K562 (cell line): ENCODE measurements at regions of chr2 and their contacts with region 1.

Region 1: DNA sequence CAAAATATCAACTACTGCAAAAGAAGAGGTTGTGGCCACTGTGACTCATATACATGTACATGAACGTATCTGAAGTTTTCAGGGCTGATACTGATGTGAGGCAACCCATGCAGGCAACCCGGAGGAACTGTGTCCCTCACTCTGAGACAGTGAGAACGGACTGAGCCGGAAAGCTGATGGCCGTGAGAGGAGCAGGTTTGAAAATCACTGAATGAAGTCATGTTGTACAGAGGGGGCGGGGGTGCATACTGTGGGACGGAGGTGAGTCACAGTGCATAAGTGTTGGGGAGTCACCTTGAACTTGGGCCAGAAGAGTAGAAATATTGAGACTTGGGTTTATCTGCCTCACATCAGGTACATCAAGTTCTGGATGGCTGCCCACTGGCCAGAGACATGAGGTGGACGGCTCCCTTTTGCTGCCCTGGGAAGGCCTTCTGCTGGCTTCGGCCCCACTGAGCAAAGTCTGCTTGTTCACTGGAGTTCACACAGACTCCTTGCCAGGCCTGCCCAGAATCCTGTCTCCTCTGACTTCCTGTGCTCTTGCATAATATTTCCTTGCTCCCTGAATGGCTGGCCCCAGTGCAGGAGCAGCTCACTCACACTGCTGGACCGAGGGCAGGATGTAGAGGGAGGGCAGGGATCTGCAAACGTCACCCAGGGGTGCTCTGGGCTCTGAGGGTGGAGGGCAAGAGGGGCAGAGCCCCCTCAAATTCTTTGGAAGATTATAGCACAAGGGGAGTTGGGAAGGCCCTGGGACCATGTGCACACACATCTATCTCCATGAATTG is 18.1 kb downstream of the EPAS1 start:
- DNase-seq: peak; percentile 75 to 92 (median 82)
- ATAC-seq: peak; percentile 89
- H3K4me3 ChIP-seq: no peak overlapping the region
- H3K27ac ChIP-seq: peak overlapping the region; percentile 86
- H3K4me1 ChIP-seq: peaks cover 24 to 61% of the 10 kb centered on the region in 2 experiments
- H3K27me3 ChIP-seq: no peaks in the 10 kb centered on the region
- CTCF ChIP-seq: no peak
- EP300 ChIP-seq: peak; percentile 88
- POLR2A ChIP-seq: 0 out of 2 replicates have a peak, but pooled peaks have one; percentile 42
- RAD21 ChIP-seq: 0 out of 4 replicates have a peak, but pooled peaks of 1 of the 2 experiments have one; percentile 10

Region 2: DNA sequence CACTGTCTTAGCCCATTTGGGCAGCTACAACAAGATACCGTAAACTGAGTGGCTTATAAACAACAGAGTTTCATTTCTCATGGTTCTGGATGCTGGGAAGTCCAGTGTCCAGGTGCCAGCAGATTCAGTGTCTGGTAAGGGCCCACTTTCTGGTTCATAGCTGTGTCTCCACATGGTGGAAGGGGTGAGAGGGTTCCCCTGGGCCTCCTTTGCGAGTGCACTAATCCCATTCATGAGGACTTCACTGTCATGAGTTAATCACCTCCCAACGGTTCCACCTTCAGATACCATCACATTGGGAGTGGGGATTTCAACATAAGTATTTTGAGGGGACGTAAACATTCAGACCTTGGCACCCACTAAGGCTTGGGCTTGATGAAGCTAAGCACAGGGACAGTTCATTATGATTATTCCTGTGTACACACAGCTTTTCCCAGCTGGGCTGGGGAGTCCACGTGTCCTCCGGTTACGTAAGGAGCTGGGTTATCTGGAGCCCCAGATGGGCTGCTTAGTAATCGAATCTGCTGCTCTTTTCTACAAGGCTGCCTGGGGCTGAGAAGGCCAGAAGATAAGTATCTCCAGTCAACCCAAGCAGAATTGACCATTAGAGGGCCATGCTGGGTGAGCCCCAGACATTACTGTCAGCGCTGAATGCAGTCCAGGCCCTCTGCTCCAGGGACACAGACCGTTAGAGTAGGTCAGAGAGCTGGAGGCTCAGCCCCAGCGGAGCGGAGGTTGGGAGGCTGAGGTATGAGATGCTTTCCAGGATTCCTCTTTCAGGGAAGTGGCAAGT is 24.6 kb after region 1 on chr2:
- CTCF ChIA-PET with region 1: no interaction called
- POLR2A ChIA-PET with region 1: interaction called, 6 read pairs
- in situ Hi-C with region 1: no loop called
- intact Hi-C with region 1: loop called (anchors 1 kb)
- DNase-seq: peak; percentile 93 to 96 (median 94)
- ATAC-seq: peak; percentile 98
- H3K4me3 ChIP-seq: no peak overlapping the region
- H3K27ac ChIP-seq: peak overlapping the region; percentile 67
- H3K4me1 ChIP-seq: peaks cover 24 to 52% of the 10 kb centered on the region in 2 experiments
- H3K27me3 ChIP-seq: no peaks in the 10 kb centered on the region
- CTCF ChIP-seq: peak; percentile 43 to 57 (median 49); a peak in 5 of 6 replicates
- EP300 ChIP-seq: peak; percentile 99
- POLR2A ChIP-seq: no peak
- RAD21 ChIP-seq: peak; percentile 60 to 61

Region 3: DNA sequence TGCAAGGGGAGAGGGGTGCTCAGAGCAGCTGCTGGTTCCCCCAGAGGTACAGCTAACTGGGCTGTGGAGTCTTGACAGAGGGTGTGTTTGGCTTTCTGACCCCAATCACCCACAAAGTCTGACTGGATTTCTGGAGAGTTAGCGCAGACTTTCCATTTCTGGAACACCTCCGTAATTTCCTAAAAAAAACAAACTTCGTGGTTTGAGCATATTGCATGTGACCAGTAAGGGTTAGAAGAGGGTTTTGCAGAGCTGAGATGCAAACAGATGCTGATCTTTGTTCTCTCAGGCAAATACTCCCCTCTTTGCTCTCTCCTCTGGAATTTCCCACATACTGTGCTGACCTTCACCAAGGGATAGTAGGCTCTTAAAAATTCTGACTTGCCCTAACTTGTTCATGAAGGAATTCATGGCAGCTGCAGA is 119.6 kb after region 1 on chr2:
- CTCF ChIA-PET with region 1: no interaction called
- POLR2A ChIA-PET with region 1: no interaction called
- in situ Hi-C with region 1: no loop called
- intact Hi-C with region 1: loop called (anchors 10 kb)
- DNase-seq: no peak
- ATAC-seq: no peak
- H3K4me3 ChIP-seq: no peak overlapping the region
- H3K27ac ChIP-seq: no peak overlapping the region
- H3K4me1 ChIP-seq: peaks cover 9 to 46% of the 10 kb centered on the region in 2 experiments; a peak in 4 of 5 replicates
- H3K27me3 ChIP-seq: no peaks in the 10 kb centered on the region
- CTCF ChIP-seq: no peak
- EP300 ChIP-seq: no peak
- POLR2A ChIP-seq: no peak
- RAD21 ChIP-seq: no peak